ENCODE measurements at regions of chr6 and their contacts with region 1.

Region 1: GRCh38 chr6:138017166-138017757 is 90.0 kb downstream of the PERP start:
- DNase-seq: no peak
- ATAC-seq: no peak
- H3K4me3 ChIP-seq: no peak overlapping the region
- H3K27ac ChIP-seq: no peak overlapping the region
- H3K4me1 ChIP-seq: no peaks in the 10 kb centered on the region
- H3K27me3 ChIP-seq: no peaks in the 10 kb centered on the region
- CTCF ChIP-seq: no peak
- POLR2A ChIP-seq: no peak
- RAD21 ChIP-seq: no peak

Region 2: GRCh38 chr6:138007014-138007472 is 10.2 kb before region 1 on chr6:
- CTCF ChIA-PET with region 1: interaction called, 16 read pairs
- POLR2A ChIA-PET with region 1: no interaction called
- RAD21 ChIA-PET with region 1: no interaction called
- intact Hi-C with region 1: no loop called
- DNase-seq: peak; percentile 45
- ATAC-seq: peak; percentile 88
- H3K4me3 ChIP-seq: no peak overlapping the region
- H3K27ac ChIP-seq: no peak overlapping the region
- H3K4me1 ChIP-seq: peaks cover 0 to 17% of the 10 kb centered on the region in 2 experiments; a peak in 3 of 4 replicates
- H3K27me3 ChIP-seq: no peaks in the 10 kb centered on the region
- CTCF ChIP-seq: peak; percentile 64 to 84 (median 83)
- POLR2A ChIP-seq: no peak
- RAD21 ChIP-seq: peak; percentile 57

Measured in HCT116 (cell line).